ENCODE measurements at regions of chr6 and their contacts with region 1.

Region 1: GRCh38 chr6:75275067-75275466 is 9.5 kb downstream of the TMEM30A start:
- DNase-seq: no peak
- ATAC-seq: no peak
- H3K4me3 Mint-ChIP-seq: no peak overlapping the region
- H3K27ac Mint-ChIP-seq: no peak overlapping the region
- H3K4me1 Mint-ChIP-seq: peaks cover 62% of the 10 kb centered on the region
- H3K27me3 Mint-ChIP-seq: no peaks in the 10 kb centered on the region
- CTCF ChIP-seq: no peak

Region 2: DNA sequence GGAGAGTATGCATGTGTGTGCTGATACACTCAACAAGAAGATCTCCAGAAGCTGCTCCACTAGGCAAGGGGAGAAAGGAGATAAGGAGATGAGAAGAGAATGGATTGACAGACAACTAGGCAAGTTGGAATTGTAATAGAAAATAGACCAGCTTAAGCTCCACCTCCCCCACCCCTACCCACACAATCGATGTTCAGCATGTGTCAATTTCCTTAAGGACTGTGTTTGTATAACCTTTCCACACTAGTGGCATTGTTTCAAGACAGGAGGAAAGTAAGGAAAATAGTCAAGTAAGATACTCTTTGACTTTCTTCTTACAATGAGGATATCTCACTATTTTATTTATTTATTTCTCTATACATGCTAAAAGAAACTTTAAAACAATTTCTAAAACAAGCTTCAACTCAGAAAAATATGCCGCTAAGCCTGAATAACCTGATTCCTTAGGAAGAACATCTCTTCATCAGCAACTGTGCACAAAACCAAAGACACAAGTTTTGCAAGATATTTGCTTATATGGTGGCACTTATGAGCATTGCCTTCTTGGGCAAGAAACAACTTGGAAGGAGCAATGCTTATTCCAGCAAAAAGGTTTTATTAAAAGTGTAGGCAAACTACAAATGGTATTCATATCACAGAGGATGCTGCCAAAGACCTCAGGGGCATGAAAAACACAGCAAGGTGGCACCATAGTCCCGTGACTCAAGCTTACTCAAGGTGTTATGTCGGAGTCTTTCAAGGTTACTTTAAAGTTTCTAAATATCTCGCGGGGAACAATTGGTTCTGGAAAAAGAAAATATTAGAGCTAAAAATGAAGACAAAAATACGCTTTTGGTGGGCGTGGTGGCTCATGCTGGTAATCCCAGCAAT is 318.3 kb before region 1 on chr6:
- CTCF ChIA-PET with region 1: no interaction called
- POLR2A ChIA-PET with region 1: no interaction called
- intact Hi-C with region 1: no loop called
- DNase-seq: no peak
- ATAC-seq: no peak
- H3K4me3 Mint-ChIP-seq: no peak overlapping the region
- H3K27ac Mint-ChIP-seq: no peak overlapping the region
- H3K4me1 Mint-ChIP-seq: no peaks in the 10 kb centered on the region
- H3K27me3 Mint-ChIP-seq: no peaks in the 10 kb centered on the region
- CTCF ChIP-seq: no peak

Region 3: DNA sequence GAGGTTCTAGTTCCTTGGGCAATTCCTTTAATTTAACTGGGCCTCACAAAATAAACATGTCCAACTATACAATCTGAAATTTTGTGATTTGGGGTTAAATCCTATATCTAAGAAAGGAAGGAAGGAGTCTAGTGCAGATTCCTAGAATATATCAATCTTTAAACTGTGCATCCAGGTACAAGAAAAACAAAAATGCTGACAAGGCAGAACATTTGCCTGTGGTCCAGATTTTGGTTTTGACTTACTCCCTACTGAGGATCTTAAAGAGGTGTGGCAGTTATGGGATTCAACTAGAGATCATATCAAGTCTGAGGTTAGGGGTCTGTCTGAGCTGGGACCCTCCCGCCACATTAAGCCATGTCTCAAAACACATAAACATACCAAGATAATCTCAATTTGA is 13.8 kb before region 1 on chr6:
- CTCF ChIA-PET with region 1: interaction called, 6 read pairs
- POLR2A ChIA-PET with region 1: no interaction called
- intact Hi-C with region 1: loop called (anchors 2 kb)
- DNase-seq: no peak
- ATAC-seq: no peak
- H3K4me3 Mint-ChIP-seq: no peak overlapping the region
- H3K27ac Mint-ChIP-seq: no peak overlapping the region
- H3K4me1 Mint-ChIP-seq: no peaks in the 10 kb centered on the region
- H3K27me3 Mint-ChIP-seq: no peaks in the 10 kb centered on the region
- CTCF ChIP-seq: no peak

Measured in activated B cell treated with CpG ODN at 0.5 μM for 24 hours (primary cell).